CD8-positive, alpha-beta T cell (primary cell): ENCODE measurements at regions of chr11 and their contacts with region 1.

Region 1: GRCh38 chr11:108333403-108333899 is 110.6 kb downstream of the ATM start:
- DNase-seq: no peak
- ATAC-seq: no peak
- H3K4me3 ChIP-seq: no peak overlapping the region
- H3K4me3 Mint-ChIP-seq: no peak overlapping the region
- H3K27ac ChIP-seq: no peak overlapping the region
- H3K27ac Mint-ChIP-seq: no peak overlapping the region
- H3K4me1 ChIP-seq: no peaks in the 10 kb centered on the region
- H3K4me1 Mint-ChIP-seq: peaks cover 13% of the 10 kb centered on the region
- H3K27me3 ChIP-seq: no peaks in the 10 kb centered on the region
- H3K27me3 Mint-ChIP-seq: no peaks in the 10 kb centered on the region
- CTCF ChIP-seq: no peak

Region 2: GRCh38 chr11:108097179-108097578 is 236.3 kb before region 1 on chr11:
- CTCF ChIA-PET with region 1: no interaction called
- POLR2A ChIA-PET with region 1: no interaction called
- intact Hi-C with region 1: loop called in 1 of 2 experiments (anchors 5 kb)
- DNase-seq: no peak
- ATAC-seq: no peak
- H3K4me3 ChIP-seq: no peak overlapping the region
- H3K4me3 Mint-ChIP-seq: no peak overlapping the region
- H3K27ac ChIP-seq: no peak overlapping the region
- H3K27ac Mint-ChIP-seq: no peak overlapping the region
- H3K4me1 ChIP-seq: no peaks in the 10 kb centered on the region
- H3K4me1 Mint-ChIP-seq: no peaks in the 10 kb centered on the region
- H3K27me3 ChIP-seq: no peaks in the 10 kb centered on the region
- H3K27me3 Mint-ChIP-seq: no peaks in the 10 kb centered on the region
- CTCF ChIP-seq: no peak

Region 3: GRCh38 chr11:108289699-108290098 is 43.8 kb before region 1 on chr11:
- CTCF ChIA-PET with region 1: no interaction called
- POLR2A ChIA-PET with region 1: interaction called, 3 read pairs
- intact Hi-C with region 1: loop called (anchors 5 kb)
- DNase-seq: no peak
- ATAC-seq: no peak
- H3K4me3 ChIP-seq: no peak overlapping the region
- H3K4me3 Mint-ChIP-seq: no peak overlapping the region
- H3K27ac ChIP-seq: peak overlapping the region in 1 of 2 experiments; percentile 20
- H3K27ac Mint-ChIP-seq: peak overlapping the region; percentile 81
- H3K4me1 ChIP-seq: peaks cover 28% of the 10 kb centered on the region
- H3K4me1 Mint-ChIP-seq: peaks cover 28% of the 10 kb centered on the region
- H3K27me3 ChIP-seq: no peaks in the 10 kb centered on the region
- H3K27me3 Mint-ChIP-seq: no peaks in the 10 kb centered on the region
- CTCF ChIP-seq: no peak

Region 4: DNA sequence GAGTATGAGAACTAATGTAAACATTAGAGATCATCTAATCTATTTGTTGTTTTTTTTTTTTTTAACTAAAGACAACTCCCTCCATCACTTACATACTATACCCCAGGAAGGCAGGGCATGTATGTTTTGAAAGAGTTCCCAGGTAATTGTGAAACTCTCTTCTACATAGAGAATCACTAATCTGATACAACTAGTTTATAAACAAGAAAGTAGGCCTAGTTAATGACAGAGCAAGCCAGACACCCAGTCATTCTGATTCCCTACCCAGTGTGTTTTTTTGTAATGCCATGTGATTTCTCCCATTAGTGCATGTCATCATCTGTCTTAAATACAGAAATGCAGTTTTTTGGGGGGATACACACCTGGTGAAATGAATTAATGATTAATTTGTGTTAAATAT is 13.0 kb after region 1 on chr11:
- CTCF ChIA-PET with region 1: interaction called, 4 read pairs
- POLR2A ChIA-PET with region 1: interaction called, 4 read pairs
- intact Hi-C with region 1: loop called in 1 of 2 experiments (anchors 2 kb)
- DNase-seq: no peak
- ATAC-seq: no peak
- H3K4me3 ChIP-seq: no peak overlapping the region
- H3K4me3 Mint-ChIP-seq: no peak overlapping the region
- H3K27ac ChIP-seq: no peak overlapping the region
- H3K27ac Mint-ChIP-seq: peak overlapping the region; percentile 74
- H3K4me1 ChIP-seq: no peaks in the 10 kb centered on the region
- H3K4me1 Mint-ChIP-seq: peaks cover 34% of the 10 kb centered on the region
- H3K27me3 ChIP-seq: no peaks in the 10 kb centered on the region
- H3K27me3 Mint-ChIP-seq: no peaks in the 10 kb centered on the region
- CTCF ChIP-seq: no peak